ENCODE measurements at regions of chr1 and their contacts with region 1.

Region 1: DNA sequence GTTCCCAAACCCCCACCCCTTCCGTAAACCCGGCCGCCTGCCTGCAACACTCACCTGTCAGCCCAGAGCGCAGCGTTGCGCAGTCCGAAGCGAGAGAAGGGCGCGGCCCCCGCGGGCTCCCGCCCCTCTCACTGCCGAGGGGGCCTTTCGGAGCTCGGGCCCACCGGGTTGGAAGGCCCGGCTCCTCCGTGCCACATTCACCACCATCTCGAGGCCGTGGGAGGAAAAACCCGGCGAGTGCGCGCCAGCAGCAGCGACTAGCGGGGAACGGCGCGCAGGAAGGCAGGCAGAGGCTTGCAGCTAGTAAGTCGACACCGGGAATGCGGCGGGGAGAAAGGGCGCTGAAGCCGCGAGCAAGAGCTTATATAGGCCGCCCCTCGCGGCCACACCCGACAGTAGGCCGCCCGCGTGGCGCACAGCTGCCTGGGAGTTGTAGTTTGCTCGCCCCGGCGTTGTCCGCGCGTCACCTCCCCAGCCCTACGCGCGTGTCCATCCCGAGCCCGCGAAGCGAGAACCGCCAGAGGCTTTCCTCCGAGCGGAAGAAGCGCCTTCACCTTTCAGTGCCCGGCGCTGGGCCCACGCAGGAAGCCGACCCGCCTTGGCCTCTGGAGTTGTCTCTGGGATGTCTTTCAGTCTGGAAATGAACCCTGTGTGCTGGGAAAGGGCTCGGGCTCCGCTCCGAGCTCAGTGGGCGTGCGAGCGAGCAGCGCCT is 10.4 kb upstream of the RAB42 start:
- DNase-seq: peak; percentile 87 to 96 (median 91)
- ATAC-seq: peak; percentile 82
- H3K4me3 ChIP-seq: peak overlapping the region; percentile 88 to 91
- H3K4me3 Mint-ChIP-seq: peak overlapping the region; percentile 99
- H3K27ac ChIP-seq: peak overlapping the region; percentile 83 to 88
- H3K27ac Mint-ChIP-seq: peak overlapping the region; percentile 97
- H3K4me1 ChIP-seq: peaks cover 24% of the 10 kb centered on the region
- H3K4me1 Mint-ChIP-seq: peaks cover 37% of the 10 kb centered on the region
- H3K27me3 ChIP-seq: no peaks in the 10 kb centered on the region
- H3K27me3 Mint-ChIP-seq: no peaks in the 10 kb centered on the region
- CTCF ChIP-seq: no peak

Region 2: GRCh38 chr1:28369371-28370238 is 212.1 kb before region 1 on chr1 and contains the start of gene PHACTR4:
- CTCF ChIA-PET with region 1: interaction called, 3 read pairs
- POLR2A ChIA-PET with region 1: interaction called, 3 read pairs
- intact Hi-C with region 1: loop called in 1 of 2 experiments (anchors 1 kb)
- DNase-seq: peak; percentile 44 to 87 (median 76)
- ATAC-seq: peak; percentile 88
- H3K4me3 ChIP-seq: peak within 1 kb of the TSS; percentile 70 to 90
- H3K4me3 Mint-ChIP-seq: peak within 1 kb of the TSS; percentile 96
- H3K27ac ChIP-seq: peak within 1 kb of the TSS; percentile 67 to 83
- H3K27ac Mint-ChIP-seq: peak within 1 kb of the TSS; percentile 94
- H3K4me1 ChIP-seq: peaks cover 5% of the 10 kb centered on the region
- H3K4me1 Mint-ChIP-seq: peaks cover 34% of the 10 kb centered on the region
- H3K27me3 ChIP-seq: no peaks in the 10 kb centered on the region
- H3K27me3 Mint-ChIP-seq: no peaks in the 10 kb centered on the region
- CTCF ChIP-seq: peak; percentile 30
- total RNA-seq, gene PHACTR4: 19.3 to 25.2 TPM

Region 3: GRCh38 chr1:28458237-28459228 is 123.2 kb before region 1 on chr1:
- CTCF ChIA-PET with region 1: no interaction called
- POLR2A ChIA-PET with region 1: no interaction called
- intact Hi-C with region 1: no loop called
- DNase-seq: no peak
- ATAC-seq: no peak
- H3K4me3 ChIP-seq: no peak overlapping the region
- H3K4me3 Mint-ChIP-seq: no peak overlapping the region
- H3K27ac ChIP-seq: no peak overlapping the region
- H3K27ac Mint-ChIP-seq: no peak overlapping the region
- H3K4me1 ChIP-seq: peaks cover 4% of the 10 kb centered on the region
- H3K4me1 Mint-ChIP-seq: peaks cover 7% of the 10 kb centered on the region
- H3K27me3 ChIP-seq: no peaks in the 10 kb centered on the region
- H3K27me3 Mint-ChIP-seq: no peaks in the 10 kb centered on the region
- CTCF ChIP-seq: no peak

Region 4: GRCh38 chr1:28518000-28518744 is 63.5 kb before region 1 on chr1:
- CTCF ChIA-PET with region 1: interaction called, 12 read pairs
- POLR2A ChIA-PET with region 1: interaction called, 22 read pairs
- intact Hi-C with region 1: loop called (anchors 1 kb)
- DNase-seq: peak; percentile 76 to 93 (median 88)
- ATAC-seq: peak; percentile 91
- H3K4me3 ChIP-seq: peak overlapping the region; percentile 59 to 79
- H3K4me3 Mint-ChIP-seq: peak overlapping the region; percentile 89
- H3K27ac ChIP-seq: peak overlapping the region; percentile 55 to 57
- H3K27ac Mint-ChIP-seq: peak overlapping the region; percentile 84
- H3K4me1 ChIP-seq: peaks cover 21% of the 10 kb centered on the region
- H3K4me1 Mint-ChIP-seq: peaks cover 28% of the 10 kb centered on the region
- H3K27me3 ChIP-seq: no peaks in the 10 kb centered on the region
- H3K27me3 Mint-ChIP-seq: no peaks in the 10 kb centered on the region
- CTCF ChIP-seq: peak; percentile 98

Region 5: DNA sequence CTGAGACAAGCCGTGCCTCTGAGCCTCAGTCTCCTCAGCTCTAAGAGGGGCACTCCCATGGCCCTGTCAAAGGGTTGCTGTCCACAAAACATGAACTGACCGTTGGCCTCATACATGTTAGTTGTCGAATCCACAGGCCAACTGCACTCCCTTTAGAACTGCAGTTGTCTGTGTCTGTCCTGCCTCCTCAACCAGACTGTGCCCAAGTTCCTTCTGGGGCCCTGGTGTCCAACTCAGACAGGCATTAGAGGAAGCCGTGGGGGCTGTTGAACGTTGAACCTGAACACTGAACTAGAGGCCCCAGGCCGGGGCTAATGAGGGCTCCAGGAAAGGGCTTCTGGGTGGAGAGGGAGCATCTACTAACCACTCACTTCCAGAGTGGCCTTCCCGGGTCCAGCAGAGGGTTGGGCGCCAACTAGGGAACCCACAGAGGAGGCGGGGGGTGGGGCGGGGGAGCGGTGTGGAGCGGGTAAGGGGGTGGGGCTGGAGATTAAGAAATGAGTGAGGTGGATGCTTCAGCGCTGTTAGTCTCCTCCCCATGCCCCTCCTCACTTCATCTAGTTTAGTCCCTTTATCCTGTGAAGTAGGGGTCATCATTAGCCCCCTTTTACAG is 10.1 kb after region 1 on chr1 and contains the start of gene RAB42:
- CTCF ChIA-PET with region 1: interaction called, 7 read pairs
- POLR2A ChIA-PET with region 1: interaction called, 19 read pairs
- intact Hi-C with region 1: no loop called
- DNase-seq: peak in 3 of 9 experiments; percentile 6 to 24 (median 21)
- ATAC-seq: peak; percentile 70
- H3K4me3 ChIP-seq: peak within 1 kb of the TSS in 1 of 2 experiments; percentile 30
- H3K4me3 Mint-ChIP-seq: peak within 1 kb of the TSS; percentile 83
- H3K27ac ChIP-seq: no peak within 1 kb of the TSS
- H3K27ac Mint-ChIP-seq: no peak within 1 kb of the TSS
- H3K4me1 ChIP-seq: peaks cover 4% of the 10 kb centered on the region
- H3K4me1 Mint-ChIP-seq: peaks cover 4% of the 10 kb centered on the region
- H3K27me3 ChIP-seq: peaks cover 0 to 5% of the 10 kb centered on the region in 2 experiments
- H3K27me3 Mint-ChIP-seq: peaks cover 9% of the 10 kb centered on the region
- CTCF ChIP-seq: no peak
- total RNA-seq, gene RAB42: not detected

Region 6: DNA sequence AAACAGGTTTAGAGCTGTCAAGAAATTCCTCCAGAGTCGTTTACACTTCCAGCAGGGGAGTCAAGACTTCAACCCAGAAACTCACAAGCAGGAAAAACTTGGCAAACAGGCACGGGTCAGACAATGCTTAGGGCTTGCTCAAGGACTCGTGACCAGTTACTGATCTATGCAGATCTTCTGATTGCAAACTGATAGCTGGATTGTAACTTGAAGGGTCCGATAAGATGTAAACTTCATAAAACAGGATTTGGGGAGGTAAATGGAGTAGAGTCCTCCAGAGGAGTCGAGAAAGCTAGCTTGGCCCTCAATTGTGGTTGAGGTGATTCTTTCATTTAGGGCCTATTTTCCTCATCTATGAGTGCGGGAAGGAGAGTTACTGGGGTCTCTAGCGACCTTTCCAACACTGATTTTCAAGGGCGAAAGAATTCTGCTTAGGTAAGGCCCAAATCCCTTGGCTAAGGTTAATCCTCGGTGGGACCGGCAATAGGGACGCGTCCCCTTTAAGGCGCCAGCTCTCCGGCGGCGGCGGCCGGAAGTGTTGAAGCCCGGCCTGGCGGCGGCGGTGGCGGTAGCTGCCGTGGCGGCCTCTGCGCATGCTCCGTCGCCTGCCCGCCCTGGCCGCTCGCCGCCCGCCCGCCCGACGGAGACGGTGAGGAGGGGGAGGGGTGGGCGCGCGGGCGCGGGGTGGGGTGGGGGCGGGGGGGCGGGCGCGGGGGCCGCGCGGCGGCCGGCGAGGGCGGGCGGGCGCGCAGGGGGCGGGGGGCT is 86.7 kb after region 1 on chr1 and contains the start of gene GMEB1:
- CTCF ChIA-PET with region 1: no interaction called
- POLR2A ChIA-PET with region 1: interaction called, 15 read pairs
- intact Hi-C with region 1: loop called in 1 of 2 experiments (anchors 1 kb)
- DNase-seq: peak; percentile 66 to 91 (median 82)
- ATAC-seq: peak; percentile 61
- H3K4me3 ChIP-seq: peak within 1 kb of the TSS; percentile 83 to 98
- H3K4me3 Mint-ChIP-seq: peak within 1 kb of the TSS; percentile 92
- H3K27ac ChIP-seq: peak within 1 kb of the TSS; percentile 81 to 98
- H3K27ac Mint-ChIP-seq: peak within 1 kb of the TSS; percentile 97
- H3K4me1 ChIP-seq: peaks cover 9% of the 10 kb centered on the region
- H3K4me1 Mint-ChIP-seq: peaks cover 22% of the 10 kb centered on the region
- H3K27me3 ChIP-seq: no peaks in the 10 kb centered on the region
- H3K27me3 Mint-ChIP-seq: no peaks in the 10 kb centered on the region
- CTCF ChIP-seq: no peak
- total RNA-seq, gene GMEB1: 12.9 to 13.6 TPM

Region 7: GRCh38 chr1:28956038-28956464 is 374.4 kb after region 1 on chr1:
- CTCF ChIA-PET with region 1: no interaction called
- POLR2A ChIA-PET with region 1: no interaction called
- intact Hi-C with region 1: no loop called
- DNase-seq: no peak
- ATAC-seq: no peak
- H3K4me3 ChIP-seq: no peak overlapping the region
- H3K4me3 Mint-ChIP-seq: no peak overlapping the region
- H3K27ac ChIP-seq: no peak overlapping the region
- H3K27ac Mint-ChIP-seq: peak overlapping the region; percentile 4
- H3K4me1 ChIP-seq: peaks cover 23% of the 10 kb centered on the region
- H3K4me1 Mint-ChIP-seq: peaks cover 68% of the 10 kb centered on the region
- H3K27me3 ChIP-seq: no peaks in the 10 kb centered on the region
- H3K27me3 Mint-ChIP-seq: no peaks in the 10 kb centered on the region
- CTCF ChIP-seq: no peak